Activated B cell treated with CpG ODN at 0.5 μM for 24 hours (primary cell): ENCODE measurements at regions of chr7 and their contacts with region 1.

Region 1: GRCh38 chr7:142782922-142783900 is 12.4 kb downstream of the PRSS2 start:
- DNase-seq: peak; percentile 71
- ATAC-seq: peak; percentile 91
- H3K4me3 Mint-ChIP-seq: peak overlapping the region; percentile 86
- H3K27ac Mint-ChIP-seq: peak overlapping the region; percentile 91
- H3K4me1 Mint-ChIP-seq: peaks cover 34% of the 10 kb centered on the region
- H3K27me3 Mint-ChIP-seq: no peaks in the 10 kb centered on the region
- CTCF ChIP-seq: peak; percentile 27

Region 2: DNA sequence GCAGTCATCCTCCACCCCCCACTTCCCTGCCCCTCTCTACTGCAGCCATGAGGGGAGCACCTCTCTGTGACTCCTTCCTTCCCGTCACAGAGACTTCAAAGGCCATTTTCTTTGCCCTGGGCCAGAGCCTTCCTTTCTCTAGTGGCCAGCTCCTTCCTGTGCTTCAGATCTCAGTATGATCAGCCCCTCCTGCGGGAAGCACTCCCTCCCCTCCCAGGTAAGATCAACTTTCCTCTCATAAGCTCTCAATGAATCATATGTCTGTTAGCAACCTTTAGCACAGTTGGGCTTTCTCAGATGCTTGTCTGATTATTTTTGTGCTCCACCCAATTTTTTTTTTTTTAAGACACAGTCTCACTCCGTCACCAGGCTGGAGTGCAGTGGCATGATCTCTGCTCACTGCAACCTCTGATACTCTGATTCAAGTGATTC is 274.9 kb before region 1 on chr7:
- CTCF ChIA-PET with region 1: no interaction called
- POLR2A ChIA-PET with region 1: no interaction called
- intact Hi-C with region 1: no loop called
- DNase-seq: no peak
- ATAC-seq: no peak
- H3K4me3 Mint-ChIP-seq: no peak overlapping the region
- H3K27ac Mint-ChIP-seq: no peak overlapping the region
- H3K4me1 Mint-ChIP-seq: no peaks in the 10 kb centered on the region
- H3K27me3 Mint-ChIP-seq: peaks cover 6% of the 10 kb centered on the region
- CTCF ChIP-seq: no peak

Region 3: DNA sequence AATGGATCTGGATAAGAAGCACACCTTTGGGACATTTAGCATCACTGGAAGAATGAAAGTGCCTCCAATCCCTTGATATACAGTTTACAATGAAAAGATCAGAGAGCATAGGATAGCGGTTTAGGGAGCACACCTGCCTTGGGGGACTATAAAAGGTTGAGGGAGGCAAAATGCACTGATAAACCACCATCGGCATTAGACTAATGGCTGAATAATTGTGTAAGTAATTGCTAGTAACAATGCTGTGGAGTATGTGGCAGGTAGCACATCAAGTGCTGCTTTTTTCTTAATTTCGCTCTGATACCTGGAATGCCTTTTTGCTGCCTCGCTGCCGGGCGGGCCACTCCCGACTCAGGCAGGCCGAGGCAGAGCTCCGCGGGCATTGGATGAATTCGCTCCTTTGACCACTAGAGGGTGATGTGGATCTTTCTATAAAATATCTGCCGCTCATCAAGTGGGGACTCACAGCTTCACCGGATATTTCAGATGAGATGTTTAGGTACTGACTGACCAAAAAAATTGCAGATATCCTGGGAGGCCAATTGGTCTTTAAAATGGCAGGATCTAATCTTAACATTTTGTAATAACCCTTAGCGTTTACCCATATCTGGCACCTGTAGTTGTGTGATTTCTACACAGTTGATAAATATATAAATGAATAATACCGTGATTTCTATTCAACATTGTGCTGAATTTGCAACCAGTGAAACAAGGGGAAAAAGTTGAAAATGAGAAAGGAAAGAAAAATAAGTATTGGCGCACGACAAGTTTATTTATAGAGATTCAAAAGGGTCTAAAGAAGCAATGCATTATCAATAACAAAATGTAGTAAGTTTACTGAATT is 150.7 kb before region 1 on chr7:
- CTCF ChIA-PET with region 1: interaction called, 95 read pairs
- POLR2A ChIA-PET with region 1: interaction called, 20 read pairs
- intact Hi-C with region 1: loop called (anchors 1 kb)
- DNase-seq: peak; percentile 44
- ATAC-seq: peak; percentile 97
- H3K4me3 Mint-ChIP-seq: no peak overlapping the region
- H3K27ac Mint-ChIP-seq: no peak overlapping the region
- H3K4me1 Mint-ChIP-seq: peaks cover 2% of the 10 kb centered on the region
- H3K27me3 Mint-ChIP-seq: peaks cover 16% of the 10 kb centered on the region
- CTCF ChIP-seq: peak; percentile 89

Region 4: DNA sequence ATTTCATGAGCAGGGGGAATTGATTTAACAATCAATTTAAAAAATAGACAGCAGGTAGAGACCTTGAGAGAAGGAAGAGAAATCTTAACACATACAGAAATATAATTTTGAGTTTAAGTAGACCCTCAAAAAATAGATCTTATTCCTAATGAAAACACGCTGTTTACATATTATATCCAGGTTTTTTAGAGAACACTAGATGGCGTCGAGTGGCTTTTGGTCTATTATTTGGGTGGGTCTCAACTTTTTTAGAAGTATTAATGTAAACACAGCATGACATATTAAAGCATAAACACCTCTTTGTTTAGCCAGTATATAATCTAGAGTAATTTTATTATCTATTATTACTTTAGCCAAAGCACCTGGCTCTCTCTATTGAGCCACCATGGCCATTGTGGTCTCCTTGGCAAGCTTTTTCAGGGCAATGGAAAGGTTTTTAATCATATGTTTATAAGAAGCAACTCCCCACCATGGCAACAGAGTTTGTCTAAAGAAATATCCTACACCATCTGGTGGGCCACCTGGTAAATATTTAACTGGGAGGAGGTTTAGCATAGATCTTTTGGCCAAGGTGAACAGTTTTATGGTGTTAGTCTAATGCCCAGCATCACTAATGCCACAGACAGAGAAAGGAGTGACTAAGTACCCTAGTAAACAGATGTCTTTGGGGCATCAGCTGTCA is 93.6 kb before region 1 on chr7:
- CTCF ChIA-PET with region 1: interaction called, 7 read pairs
- POLR2A ChIA-PET with region 1: no interaction called
- intact Hi-C with region 1: loop called (anchors 1 kb)
- DNase-seq: no peak
- ATAC-seq: no peak
- H3K4me3 Mint-ChIP-seq: no peak overlapping the region
- H3K27ac Mint-ChIP-seq: no peak overlapping the region
- H3K4me1 Mint-ChIP-seq: peaks cover 8% of the 10 kb centered on the region
- H3K27me3 Mint-ChIP-seq: no peaks in the 10 kb centered on the region
- CTCF ChIP-seq: no peak

Region 5: GRCh38 chr7:142739923-142740492 is 43.2 kb before region 1 on chr7:
- CTCF ChIA-PET with region 1: interaction called, 34 read pairs
- POLR2A ChIA-PET with region 1: interaction called, 7 read pairs
- intact Hi-C with region 1: loop called (anchors 1 kb)
- DNase-seq: no peak
- ATAC-seq: peak; percentile 96
- H3K4me3 Mint-ChIP-seq: peak overlapping the region; percentile 6
- H3K27ac Mint-ChIP-seq: peak overlapping the region; percentile 18
- H3K4me1 Mint-ChIP-seq: peaks cover 41% of the 10 kb centered on the region
- H3K27me3 Mint-ChIP-seq: no peaks in the 10 kb centered on the region
- CTCF ChIP-seq: no peak

Region 6: DNA sequence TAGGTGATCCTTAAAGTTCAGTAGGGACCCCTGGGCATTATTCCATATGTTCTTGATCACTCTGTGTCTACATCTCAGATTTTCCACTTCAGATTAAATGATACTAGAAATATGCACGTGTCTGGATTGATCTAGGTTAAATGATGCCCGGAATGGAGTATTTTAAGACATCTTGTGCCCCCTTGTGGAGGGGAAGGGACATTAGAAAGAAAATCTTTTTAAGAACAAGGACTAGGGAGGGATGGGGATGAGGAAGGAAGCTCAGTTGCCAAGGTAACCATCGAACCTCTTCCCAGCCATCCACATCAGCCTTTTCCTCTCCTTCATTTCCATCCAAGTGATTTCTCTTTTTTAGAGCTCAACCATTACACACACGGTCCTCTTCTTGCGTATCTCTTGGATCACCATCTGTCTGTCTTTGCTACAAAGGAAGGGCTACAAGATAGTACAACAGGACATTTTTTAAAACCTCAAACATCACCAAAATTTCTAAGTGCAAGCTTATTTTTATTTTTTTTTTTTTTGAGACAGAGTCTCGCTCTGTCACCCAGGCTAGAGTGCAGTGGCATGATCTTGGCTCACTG is 28.0 kb after region 1 on chr7:
- CTCF ChIA-PET with region 1: interaction called, 571 read pairs
- POLR2A ChIA-PET with region 1: interaction called, 1,916 read pairs
- intact Hi-C with region 1: loop called (anchors 1 kb)
- DNase-seq: no peak
- ATAC-seq: no peak
- H3K4me3 Mint-ChIP-seq: peak overlapping the region; percentile 17
- H3K27ac Mint-ChIP-seq: peak overlapping the region; percentile 98
- H3K4me1 Mint-ChIP-seq: peaks cover 85% of the 10 kb centered on the region
- H3K27me3 Mint-ChIP-seq: no peaks in the 10 kb centered on the region
- CTCF ChIP-seq: no peak

Region 7: DNA sequence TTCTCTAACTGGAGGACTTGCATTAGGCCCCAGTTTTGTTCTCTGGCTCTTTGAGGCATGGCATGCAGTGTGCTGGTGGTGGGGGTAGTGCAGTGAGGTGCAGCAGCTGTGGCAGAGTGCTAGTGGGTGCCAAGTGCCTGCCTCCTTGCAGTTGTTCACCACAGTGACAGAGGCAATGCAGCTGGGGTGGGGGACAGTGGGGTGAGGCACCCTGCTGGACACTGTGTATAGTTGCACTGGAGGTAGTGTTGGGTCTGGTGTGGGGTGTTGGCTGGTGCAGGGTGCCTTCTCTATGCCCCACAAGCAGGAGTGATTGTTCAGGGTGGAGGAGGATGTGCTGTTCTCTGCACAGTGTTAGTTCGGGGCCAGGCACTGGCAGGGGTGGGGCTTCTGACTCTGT is 200.6 kb after region 1 on chr7:
- CTCF ChIA-PET with region 1: no interaction called
- POLR2A ChIA-PET with region 1: no interaction called
- intact Hi-C with region 1: no loop called
- DNase-seq: no peak
- ATAC-seq: no peak
- H3K4me3 Mint-ChIP-seq: no peak overlapping the region
- H3K27ac Mint-ChIP-seq: no peak overlapping the region
- H3K4me1 Mint-ChIP-seq: no peaks in the 10 kb centered on the region
- H3K27me3 Mint-ChIP-seq: peaks cover 18% of the 10 kb centered on the region
- CTCF ChIP-seq: no peak

Region 8: DNA sequence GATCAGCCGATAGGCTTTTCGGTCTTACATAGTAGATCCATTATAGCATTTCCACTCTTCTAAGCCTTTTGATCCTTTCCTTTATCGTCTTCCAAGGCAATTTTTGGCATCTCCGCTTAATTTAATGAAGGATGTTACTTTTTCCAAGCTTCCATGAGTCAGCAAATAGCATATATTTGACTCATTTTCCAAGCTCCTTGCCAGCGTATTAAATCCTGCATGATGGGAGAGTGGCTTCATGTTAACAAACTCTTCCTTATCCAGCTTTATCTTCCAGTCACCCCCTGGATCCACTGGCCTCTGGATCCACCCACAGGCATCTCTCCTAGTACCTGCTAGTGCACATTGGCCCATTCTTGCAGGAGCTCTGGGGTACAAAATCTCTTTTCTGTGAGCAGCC is 230.7 kb after region 1 on chr7:
- CTCF ChIA-PET with region 1: interaction called, 4 read pairs
- POLR2A ChIA-PET with region 1: interaction called, 13 read pairs
- intact Hi-C with region 1: no loop called
- DNase-seq: no peak
- ATAC-seq: no peak
- H3K4me3 Mint-ChIP-seq: peak overlapping the region; percentile 21
- H3K27ac Mint-ChIP-seq: peak overlapping the region; percentile 95
- H3K4me1 Mint-ChIP-seq: peaks cover 83% of the 10 kb centered on the region
- H3K27me3 Mint-ChIP-seq: no peaks in the 10 kb centered on the region
- CTCF ChIP-seq: no peak